ENCODE measurements at regions of chr7 and their contacts with region 1.

Region 1: GRCh38 chr7:816300-816750 is 16.0 kb upstream of the SUN1 start:
- DNase-seq: peak; percentile 98
- H3K4me3 Mint-ChIP-seq: peak overlapping the region; percentile 81
- H3K27ac Mint-ChIP-seq: no peak overlapping the region
- H3K4me1 Mint-ChIP-seq: peaks cover 61% of the 10 kb centered on the region
- H3K27me3 Mint-ChIP-seq: peaks cover 5% of the 10 kb centered on the region

Region 2: GRCh38 chr7:1159891-1160668 is 343.8 kb after region 1 on chr7 and contains the start of gene ZFAND2A:
- CTCF ChIA-PET with region 1: no interaction called
- intact Hi-C with region 1: loop called (anchors 10 kb)
- DNase-seq: peak; percentile 99
- H3K4me3 Mint-ChIP-seq: peak within 1 kb of the TSS; percentile 86
- H3K27ac Mint-ChIP-seq: peak within 1 kb of the TSS; percentile 78
- H3K4me1 Mint-ChIP-seq: peaks cover 29% of the 10 kb centered on the region
- H3K27me3 Mint-ChIP-seq: no peaks in the 10 kb centered on the region
- total RNA-seq, gene ZFAND2A: 19.1 to 20.7 TPM

Measured in activated naive CD4-positive, alpha-beta T cell treated with anti-CD3 and anti-CD28 coated beads for 36 hours (primary cell).